Tibial artery (tissue), 4 donors: ENCODE measurements at regions of chr19 and their contacts with region 1.

Region 1: DNA sequence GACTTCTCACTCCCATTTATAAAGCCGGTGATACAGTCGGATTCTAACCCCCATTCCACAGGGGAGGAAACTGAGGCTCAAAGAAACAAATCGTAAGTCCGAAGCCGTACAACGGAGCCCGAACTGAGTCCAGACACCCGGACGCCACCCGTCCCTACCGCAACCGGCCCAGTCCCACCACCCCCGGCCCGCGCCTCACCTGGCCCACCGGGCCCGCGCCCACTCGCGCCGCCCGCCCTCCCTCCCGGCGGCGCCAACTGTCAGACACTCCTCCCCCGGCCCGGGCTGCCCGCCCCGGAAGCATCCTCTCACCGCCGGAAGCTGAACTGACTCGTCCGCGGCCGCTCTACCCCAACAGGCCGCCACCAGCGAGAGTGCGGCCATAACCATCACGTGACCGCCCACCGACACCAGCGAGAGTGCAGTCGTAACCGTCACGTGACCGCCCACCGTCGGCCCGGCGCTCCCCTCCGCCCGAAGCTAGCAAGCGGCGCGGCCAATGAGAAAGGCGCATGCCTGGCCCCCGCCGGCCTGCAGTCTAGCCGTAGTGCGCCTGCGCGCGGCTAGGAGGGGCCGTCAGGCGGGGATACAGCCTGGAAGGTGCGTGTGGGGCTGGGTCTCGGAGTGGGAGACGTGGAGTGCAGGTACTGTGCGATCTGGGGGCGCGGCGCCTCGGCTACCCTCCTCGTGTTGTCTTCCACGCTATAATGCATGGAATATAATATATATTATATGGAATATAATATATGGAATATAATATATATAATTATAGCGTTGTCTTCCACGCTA is at the starts of genes C19orf47 and PLD3:
- DNase-seq: peak; percentile 100
- H3K4me3 ChIP-seq: peak within 1 kb of the TSS; percentile 58 to 68
- H3K27ac ChIP-seq: peak within 1 kb of the TSS; percentile 61 to 81
- H3K4me1 ChIP-seq: peaks cover 0 to 39% (median 10%) of the 10 kb centered on the region in 4 donors
- H3K27me3 ChIP-seq: no peaks in the 10 kb centered on the region
- CTCF ChIP-seq: peak in 1 of 2 experiments; percentile 48

Region 2: GRCh38 chr19:40305403-40305802 is 42.9 kb before region 1 on chr19:
- intact Hi-C with region 1: no loop called
- DNase-seq: peak; percentile 52 to 86
- H3K4me3 ChIP-seq: no peak overlapping the region
- H3K27ac ChIP-seq: no peak overlapping the region
- H3K4me1 ChIP-seq: no peaks in the 10 kb centered on the region
- H3K27me3 ChIP-seq: no peaks in the 10 kb centered on the region
- CTCF ChIP-seq: peak; percentile 72 to 74

Region 3: GRCh38 chr19:40416918-40417642 is 68.8 kb after region 1 on chr19:
- intact Hi-C with region 1: loop called (anchors 5 kb)
- DNase-seq: peak in 1 of 2 donors; percentile 62
- H3K4me3 ChIP-seq: no peak overlapping the region
- H3K27ac ChIP-seq: peak overlapping the region; percentile 37 to 45
- H3K4me1 ChIP-seq: peaks cover 0 to 14% (median 10%) of the 10 kb centered on the region in 4 donors
- H3K27me3 ChIP-seq: no peaks in the 10 kb centered on the region
- CTCF ChIP-seq: no peak